Heart right ventricle (tissue), 16 donors: ENCODE measurements at regions of chr11 and their contacts with region 1.

Region 1: DNA sequence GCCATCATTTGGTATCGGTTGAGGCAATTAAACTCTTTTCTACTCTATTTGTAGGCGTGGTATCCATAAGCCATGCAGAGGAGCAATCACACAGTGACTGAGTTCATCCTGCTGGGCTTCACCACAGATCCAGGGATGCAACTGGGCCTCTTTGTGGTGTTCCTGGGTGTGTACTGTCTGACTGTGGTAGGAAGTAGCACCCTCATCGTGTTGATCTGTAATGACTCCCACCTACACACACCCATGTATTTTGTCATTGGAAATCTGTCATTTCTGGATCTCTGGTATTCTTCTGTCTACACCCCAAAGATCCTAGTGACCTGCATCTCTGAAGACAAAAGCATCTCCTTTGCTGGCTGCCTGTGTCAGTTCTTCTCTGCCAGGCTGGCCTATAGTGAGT is 8.4 kb downstream of the OR9G4 start:
- DNase-seq: no peak
- ATAC-seq: no peak
- H3K4me3 ChIP-seq: no peak overlapping the region
- H3K27ac ChIP-seq: no peak overlapping the region
- H3K4me1 ChIP-seq: no peaks in the 10 kb centered on the region
- H3K27me3 ChIP-seq: peaks cover 0 to 5% (median 0%) of the 10 kb centered on the region in 7 donors
- CTCF ChIP-seq: no peak

Region 2: GRCh38 chr11:56234155-56234554 is 506.0 kb before region 1 on chr11 and contains the start of gene OR5T2:
- intact Hi-C with region 1: no loop called
- DNase-seq: no peak
- ATAC-seq: no peak
- H3K4me3 ChIP-seq: no peak within 1 kb of the TSS
- H3K27ac ChIP-seq: no peak within 1 kb of the TSS
- H3K4me1 ChIP-seq: no peaks in the 10 kb centered on the region
- H3K27me3 ChIP-seq: no peaks in the 10 kb centered on the region
- CTCF ChIP-seq: no peak
- total RNA-seq, gene OR5T2: not detected

Region 3: DNA sequence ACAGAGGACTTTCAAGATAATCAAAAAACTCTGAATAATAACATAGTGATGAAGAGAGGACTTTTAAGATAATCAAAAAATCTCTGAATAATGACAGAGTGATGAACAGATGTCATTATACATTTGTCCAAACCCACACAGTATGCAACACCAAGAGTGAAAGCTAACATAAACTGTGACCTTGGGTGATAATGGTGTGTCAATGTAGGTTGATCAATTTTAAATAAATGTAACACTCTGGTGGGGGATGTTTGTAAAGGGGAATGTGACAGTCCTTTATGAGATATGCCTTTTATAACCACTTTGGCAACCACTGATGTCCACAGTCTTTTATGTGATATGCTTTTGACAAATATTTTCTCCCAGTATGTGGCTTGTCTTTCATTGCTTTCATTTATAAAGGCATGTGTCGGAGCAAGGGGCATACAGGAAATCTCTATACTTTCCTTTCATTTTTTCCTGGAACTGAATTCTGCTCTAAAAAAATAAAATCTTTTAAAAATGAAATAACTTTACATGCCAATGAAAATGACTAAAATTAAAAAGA is 51.5 kb before region 1 on chr11:
- intact Hi-C with region 1: loop called in 1 of 10 experiments (anchors 10 kb)
- DNase-seq: no peak
- ATAC-seq: no peak
- H3K4me3 ChIP-seq: no peak overlapping the region
- H3K27ac ChIP-seq: no peak overlapping the region
- H3K4me1 ChIP-seq: no peaks in the 10 kb centered on the region
- H3K27me3 ChIP-seq: no peaks in the 10 kb centered on the region
- CTCF ChIP-seq: no peak

Region 4: DNA sequence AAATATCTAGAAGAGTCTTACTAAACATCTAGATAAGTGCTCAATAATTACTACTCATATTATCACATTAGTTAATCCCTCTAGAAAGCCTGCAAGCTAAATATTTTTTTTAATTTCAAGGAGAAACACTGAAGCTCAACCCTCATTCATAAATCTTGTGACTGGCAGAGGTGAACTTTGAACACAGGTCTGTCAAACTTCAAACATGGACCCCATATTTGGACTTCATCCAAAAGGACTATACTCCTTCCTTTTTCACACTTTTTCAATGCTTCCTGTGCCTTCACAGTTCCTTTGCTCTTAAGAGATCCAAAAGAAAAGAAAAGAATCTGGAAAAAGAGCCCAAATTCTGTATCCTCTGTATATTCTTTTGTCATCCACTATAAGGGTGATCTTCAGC is 36.7 kb after region 1 on chr11:
- intact Hi-C with region 1: no loop called
- DNase-seq: no peak
- ATAC-seq: no peak
- H3K4me3 ChIP-seq: no peak overlapping the region
- H3K27ac ChIP-seq: no peak overlapping the region
- H3K4me1 ChIP-seq: no peaks in the 10 kb centered on the region
- H3K27me3 ChIP-seq: peaks cover 0 to 5% (median 0%) of the 10 kb centered on the region in 7 donors
- CTCF ChIP-seq: no peak